ENCODE measurements at regions of chr7 and their contacts with region 1.

Region 1: DNA sequence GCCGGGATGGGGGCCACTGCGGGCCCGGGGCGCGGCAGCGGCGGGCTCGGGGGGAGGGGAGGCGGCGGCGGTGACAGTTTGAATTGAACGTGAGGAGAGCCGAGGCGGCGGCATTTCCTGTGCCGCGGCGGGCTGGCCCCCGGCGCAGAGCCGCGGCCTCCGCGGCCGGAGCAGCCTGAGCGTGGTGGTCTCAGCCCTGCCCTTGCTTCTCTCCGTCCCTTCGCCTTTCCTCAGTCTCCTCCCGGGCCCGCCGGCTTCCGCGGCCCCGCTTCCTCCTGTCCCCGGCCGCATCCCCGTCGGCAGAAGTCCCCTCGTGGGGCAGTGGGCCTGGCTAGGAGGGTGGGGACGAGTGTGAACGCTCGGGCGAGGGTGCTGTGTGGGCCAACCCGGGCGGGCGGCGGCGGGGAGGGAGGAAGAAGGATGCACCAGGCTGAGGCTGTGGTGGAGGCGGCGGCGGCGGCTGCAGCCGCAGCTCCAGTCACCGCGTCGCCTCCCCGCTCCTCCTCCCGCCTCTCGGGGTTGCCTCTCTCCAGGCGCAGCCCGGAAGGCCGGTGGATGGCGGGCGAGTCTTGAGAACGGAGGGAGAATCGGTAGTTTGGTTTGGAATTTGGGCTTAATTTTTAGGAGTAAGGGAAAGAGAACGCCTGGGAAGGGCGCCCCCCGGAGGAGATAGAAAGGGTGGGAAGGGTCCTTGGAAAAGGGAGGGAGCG is 690 bp downstream of the SEPTIN7 start:
- DNase-seq: peak; percentile 80
- H3K4me3 Mint-ChIP-seq: peak overlapping the region; percentile 97
- H3K27ac Mint-ChIP-seq: peak overlapping the region; percentile 98
- H3K4me1 Mint-ChIP-seq: peaks cover 44% of the 10 kb centered on the region
- H3K27me3 Mint-ChIP-seq: no peaks in the 10 kb centered on the region

Region 2: GRCh38 chr7:34991938-34992840 is 809.4 kb before region 1 on chr7:
- CTCF ChIA-PET with region 1: no interaction called
- POLR2A ChIA-PET with region 1: no interaction called
- intact Hi-C with region 1: loop called (anchors 2 kb)
- DNase-seq: peak; percentile 81
- H3K4me3 Mint-ChIP-seq: peak overlapping the region; percentile 23
- H3K27ac Mint-ChIP-seq: peak overlapping the region; percentile 83
- H3K4me1 Mint-ChIP-seq: peaks cover 29% of the 10 kb centered on the region
- H3K27me3 Mint-ChIP-seq: no peaks in the 10 kb centered on the region

Region 3: DNA sequence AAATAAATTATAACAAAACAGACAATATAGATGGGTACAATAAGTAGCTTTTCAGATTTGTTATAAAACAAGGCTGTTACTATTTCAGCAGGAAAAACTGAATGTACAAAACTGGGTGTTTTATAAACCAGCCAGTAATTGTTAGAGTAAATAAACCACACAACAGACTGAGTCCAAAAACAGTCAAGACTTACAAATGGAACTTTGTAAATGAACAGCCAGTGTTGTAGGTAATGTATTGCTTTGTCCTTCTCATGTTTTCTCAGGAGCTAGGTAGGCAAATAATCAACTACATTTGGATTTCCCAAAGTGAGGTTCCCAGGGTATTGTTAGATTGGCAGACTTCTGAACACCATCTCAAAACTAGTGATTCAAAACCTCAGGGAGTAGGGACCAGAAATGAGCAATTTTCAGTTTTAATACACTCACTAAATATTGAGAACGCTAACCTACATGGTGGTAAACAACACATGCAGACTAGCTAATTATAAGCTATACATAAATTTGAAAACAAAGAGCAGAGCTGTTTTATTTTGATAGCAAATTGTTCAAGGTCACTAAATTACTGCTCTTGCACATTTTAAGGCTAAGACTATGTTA is 142.8 kb before region 1 on chr7:
- CTCF ChIA-PET with region 1: no interaction called
- POLR2A ChIA-PET with region 1: no interaction called
- intact Hi-C with region 1: no loop called
- DNase-seq: no peak
- H3K4me3 Mint-ChIP-seq: no peak overlapping the region
- H3K27ac Mint-ChIP-seq: no peak overlapping the region
- H3K4me1 Mint-ChIP-seq: peaks cover 43% of the 10 kb centered on the region
- H3K27me3 Mint-ChIP-seq: no peaks in the 10 kb centered on the region

Region 4: DNA sequence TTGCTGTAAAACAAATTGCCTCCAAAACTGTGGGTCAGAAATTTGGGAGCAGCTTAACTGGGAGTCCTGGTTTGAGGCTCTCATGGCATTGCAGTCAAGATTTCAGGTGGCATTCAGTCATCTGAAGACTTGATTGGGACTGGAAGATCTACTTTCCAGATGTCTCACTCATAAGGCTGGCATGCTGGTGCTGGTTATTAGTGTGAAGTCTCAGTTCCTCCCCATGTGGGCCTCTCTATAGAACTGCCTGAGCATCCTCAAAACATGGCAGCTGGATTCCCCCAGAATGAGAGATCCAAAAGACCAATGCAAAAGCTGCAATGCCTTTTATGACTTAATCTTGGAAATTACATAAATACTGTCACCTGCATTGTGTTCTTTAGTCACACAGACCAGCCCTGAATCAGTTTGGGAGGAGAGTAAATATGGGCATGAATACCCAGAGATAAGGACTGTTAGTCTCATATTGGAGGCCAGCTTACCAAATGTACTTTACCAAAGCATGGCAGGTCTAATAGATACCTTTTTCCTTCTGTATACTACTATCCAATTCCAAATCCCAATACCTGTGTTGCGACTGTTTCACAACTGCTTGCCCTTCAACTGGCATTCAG is 100.2 kb before region 1 on chr7:
- CTCF ChIA-PET with region 1: interaction called, 26 read pairs
- POLR2A ChIA-PET with region 1: interaction called, 70 read pairs
- intact Hi-C with region 1: no loop called
- DNase-seq: peak; percentile 46
- H3K4me3 Mint-ChIP-seq: no peak overlapping the region
- H3K27ac Mint-ChIP-seq: no peak overlapping the region
- H3K4me1 Mint-ChIP-seq: peaks cover 34% of the 10 kb centered on the region
- H3K27me3 Mint-ChIP-seq: no peaks in the 10 kb centered on the region

Region 5: DNA sequence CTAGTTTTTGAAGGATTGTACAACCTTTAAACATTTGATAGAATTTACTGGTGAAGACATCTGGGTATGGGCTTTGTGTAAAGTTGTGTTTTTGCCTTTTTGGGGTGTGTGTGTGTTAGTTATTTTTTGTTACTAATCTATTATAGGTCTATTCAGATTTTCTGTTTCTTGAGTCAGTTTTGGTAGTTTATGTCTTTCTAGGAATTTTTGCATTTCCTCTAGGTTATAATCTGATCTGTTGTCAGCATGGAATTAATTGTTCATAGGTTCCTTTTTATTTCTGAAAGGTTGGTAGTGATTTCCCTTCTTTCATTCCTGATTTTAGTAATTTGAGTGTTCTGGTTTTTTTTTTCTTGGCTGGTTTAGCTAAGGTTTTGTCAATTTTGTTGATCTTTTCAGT is 17.0 kb after region 1 on chr7:
- CTCF ChIA-PET with region 1: interaction called, 5 read pairs
- POLR2A ChIA-PET with region 1: interaction called, 16 read pairs
- intact Hi-C with region 1: loop called (anchors 1 kb)
- DNase-seq: no peak
- H3K4me3 Mint-ChIP-seq: peak overlapping the region; percentile 16
- H3K27ac Mint-ChIP-seq: peak overlapping the region; percentile 72
- H3K4me1 Mint-ChIP-seq: peaks cover 70% of the 10 kb centered on the region
- H3K27me3 Mint-ChIP-seq: no peaks in the 10 kb centered on the region

Region 6: GRCh38 chr7:35906191-35906908 is 104.8 kb after region 1 on chr7:
- CTCF ChIA-PET with region 1: interaction called, 3 read pairs
- POLR2A ChIA-PET with region 1: no interaction called
- intact Hi-C with region 1: loop called (anchors 5 kb)
- DNase-seq: peak; percentile 70
- H3K4me3 Mint-ChIP-seq: no peak overlapping the region
- H3K27ac Mint-ChIP-seq: no peak overlapping the region
- H3K4me1 Mint-ChIP-seq: no peaks in the 10 kb centered on the region
- H3K27me3 Mint-ChIP-seq: no peaks in the 10 kb centered on the region

Region 7: DNA sequence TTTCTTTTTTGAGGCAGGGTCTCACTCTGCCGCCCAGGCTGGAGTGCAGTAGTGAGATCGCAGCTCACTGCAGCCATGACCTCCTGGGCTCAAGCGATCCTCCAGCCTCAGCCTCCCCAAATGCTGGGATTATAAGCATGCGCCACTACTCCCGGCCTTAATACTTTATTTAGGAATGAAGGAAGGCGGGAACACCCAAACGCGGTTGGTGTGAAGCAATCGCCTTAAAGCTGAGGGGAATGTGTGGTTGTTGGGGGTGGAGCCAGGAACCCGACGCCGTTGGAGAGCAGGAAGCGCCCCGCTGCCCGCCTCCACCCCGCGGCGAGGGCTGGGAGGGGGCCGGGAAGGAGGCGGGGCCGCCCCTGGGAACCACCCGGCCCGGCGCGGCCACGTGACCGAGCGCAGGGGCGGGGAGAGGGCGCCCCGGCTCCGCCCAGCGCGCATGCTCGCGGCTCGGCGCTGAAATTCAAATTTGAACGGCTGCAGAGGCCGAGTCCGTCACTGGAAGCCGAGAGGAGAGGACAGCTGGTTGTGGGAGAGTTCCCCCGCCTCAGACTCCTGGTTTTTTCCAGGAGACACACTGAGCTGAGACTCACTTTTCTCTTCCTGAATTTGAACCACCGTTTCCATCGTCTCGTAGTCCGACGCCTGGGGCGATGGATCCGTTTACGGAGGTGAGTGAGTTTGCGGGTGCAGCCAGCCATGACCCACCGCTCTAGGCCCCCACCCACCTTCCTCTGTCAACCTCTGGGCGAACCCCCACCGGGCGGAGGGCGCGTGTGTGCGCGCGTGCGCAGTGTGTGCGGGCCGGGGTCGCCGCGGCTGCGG is 588.0 kb after region 1 on chr7 and contains the start of gene ANLN:
- CTCF ChIA-PET with region 1: no interaction called
- POLR2A ChIA-PET with region 1: no interaction called
- intact Hi-C with region 1: loop called (anchors 5 kb)
- DNase-seq: peak; percentile 91
- H3K4me3 Mint-ChIP-seq: peak within 1 kb of the TSS; percentile 93
- H3K27ac Mint-ChIP-seq: peak within 1 kb of the TSS; percentile 88
- H3K4me1 Mint-ChIP-seq: peaks cover 24% of the 10 kb centered on the region
- H3K27me3 Mint-ChIP-seq: no peaks in the 10 kb centered on the region
- total RNA-seq, gene ANLN: 46.6 to 54.7 TPM